ENCODE measurements at regions of chr5 and their contacts with region 1.

Region 1: GRCh38 chr5:671459-672328 is 21.5 kb downstream of the TPPP start:
- DNase-seq: peak; percentile 68
- ATAC-seq: peak; percentile 67
- H3K4me3 ChIP-seq: peak overlapping the region; percentile 22 to 49; a peak in 3 of 4 replicates
- H3K27ac ChIP-seq: peak overlapping the region; percentile 57
- H3K4me1 ChIP-seq: peaks cover 52% of the 10 kb centered on the region
- H3K27me3 ChIP-seq: no peaks in the 10 kb centered on the region
- CTCF ChIP-seq: peak; percentile 96

Region 2: GRCh38 chr5:504326-505154 is 167.2 kb before region 1 on chr5:
- CTCF ChIA-PET with region 1: no interaction called
- POLR2A ChIA-PET with region 1: interaction called, 12 read pairs
- in situ Hi-C with region 1: no loop called
- intact Hi-C with region 1: no loop called
- DNase-seq: no peak
- ATAC-seq: peak; percentile 50; the same call in 1 of the 2 replicates
- H3K4me3 ChIP-seq: no peak overlapping the region
- H3K27ac ChIP-seq: no peak overlapping the region
- H3K4me1 ChIP-seq: peaks cover 9% of the 10 kb centered on the region
- H3K27me3 ChIP-seq: no peaks in the 10 kb centered on the region
- CTCF ChIP-seq: no peak

Region 3: DNA sequence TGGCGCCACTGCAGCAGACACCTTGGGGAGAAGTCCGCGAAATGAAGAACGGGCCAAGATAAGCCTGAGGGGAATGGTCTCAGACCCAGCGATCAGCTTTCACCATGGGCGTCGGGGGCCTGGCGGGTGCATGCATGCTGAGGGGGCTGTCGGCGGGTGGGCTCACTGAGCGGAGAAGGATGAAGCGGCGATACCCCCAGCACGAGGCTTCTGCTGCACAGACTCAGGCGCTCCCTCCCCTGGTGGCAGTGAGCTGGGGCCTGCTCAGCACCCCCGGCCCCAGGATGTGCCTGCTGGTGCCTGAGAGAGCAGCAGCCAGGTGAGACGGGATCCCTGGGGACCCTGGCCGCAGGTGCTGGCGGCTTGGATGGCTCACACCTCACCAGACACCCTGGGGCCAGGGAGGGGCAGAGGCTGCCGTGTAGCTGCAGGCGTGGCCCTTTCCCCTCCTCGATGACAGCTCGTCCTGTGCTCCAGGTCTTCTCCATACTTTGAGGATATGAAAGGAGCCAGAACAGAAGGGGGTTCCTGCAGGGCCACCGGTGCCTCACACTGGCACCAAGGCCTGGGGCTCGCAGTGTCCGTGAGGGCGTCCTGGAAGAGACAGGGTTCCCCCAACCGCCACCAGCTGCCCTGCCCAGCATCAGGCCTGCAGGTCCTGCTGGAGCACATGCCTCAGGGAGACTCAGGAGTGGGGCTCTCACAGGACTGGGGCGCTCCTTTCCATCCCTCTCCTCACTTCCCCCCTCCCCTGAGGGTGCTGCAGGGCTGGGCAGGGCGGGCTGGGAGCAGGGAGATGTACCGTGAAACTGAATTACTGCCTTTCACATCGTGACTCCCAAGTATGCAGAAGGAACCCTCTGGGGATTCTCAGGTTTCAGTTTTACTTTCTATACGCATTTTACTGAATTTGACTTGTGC is 28.1 kb before region 1 on chr5:
- CTCF ChIA-PET with region 1: no interaction called
- POLR2A ChIA-PET with region 1: no interaction called
- in situ Hi-C with region 1: no loop called
- intact Hi-C with region 1: no loop called
- DNase-seq: no peak
- ATAC-seq: no peak
- H3K4me3 ChIP-seq: no peak overlapping the region
- H3K27ac ChIP-seq: no peak overlapping the region
- H3K4me1 ChIP-seq: no peaks in the 10 kb centered on the region
- H3K27me3 ChIP-seq: no peaks in the 10 kb centered on the region
- CTCF ChIP-seq: no peak

Region 4: GRCh38 chr5:902129-902916 is 230.6 kb after region 1 on chr5:
- CTCF ChIA-PET with region 1: no interaction called
- POLR2A ChIA-PET with region 1: interaction called, 9 read pairs
- in situ Hi-C with region 1: no loop called
- intact Hi-C with region 1: loop called (anchors 5 kb)
- DNase-seq: no peak
- ATAC-seq: no peak
- H3K4me3 ChIP-seq: no peak overlapping the region
- H3K27ac ChIP-seq: no peak overlapping the region
- H3K4me1 ChIP-seq: no peaks in the 10 kb centered on the region
- H3K27me3 ChIP-seq: no peaks in the 10 kb centered on the region
- CTCF ChIP-seq: no peak